A549 (cell line): ENCODE measurements at regions of chr10 and their contacts with region 1.

Region 1: DNA sequence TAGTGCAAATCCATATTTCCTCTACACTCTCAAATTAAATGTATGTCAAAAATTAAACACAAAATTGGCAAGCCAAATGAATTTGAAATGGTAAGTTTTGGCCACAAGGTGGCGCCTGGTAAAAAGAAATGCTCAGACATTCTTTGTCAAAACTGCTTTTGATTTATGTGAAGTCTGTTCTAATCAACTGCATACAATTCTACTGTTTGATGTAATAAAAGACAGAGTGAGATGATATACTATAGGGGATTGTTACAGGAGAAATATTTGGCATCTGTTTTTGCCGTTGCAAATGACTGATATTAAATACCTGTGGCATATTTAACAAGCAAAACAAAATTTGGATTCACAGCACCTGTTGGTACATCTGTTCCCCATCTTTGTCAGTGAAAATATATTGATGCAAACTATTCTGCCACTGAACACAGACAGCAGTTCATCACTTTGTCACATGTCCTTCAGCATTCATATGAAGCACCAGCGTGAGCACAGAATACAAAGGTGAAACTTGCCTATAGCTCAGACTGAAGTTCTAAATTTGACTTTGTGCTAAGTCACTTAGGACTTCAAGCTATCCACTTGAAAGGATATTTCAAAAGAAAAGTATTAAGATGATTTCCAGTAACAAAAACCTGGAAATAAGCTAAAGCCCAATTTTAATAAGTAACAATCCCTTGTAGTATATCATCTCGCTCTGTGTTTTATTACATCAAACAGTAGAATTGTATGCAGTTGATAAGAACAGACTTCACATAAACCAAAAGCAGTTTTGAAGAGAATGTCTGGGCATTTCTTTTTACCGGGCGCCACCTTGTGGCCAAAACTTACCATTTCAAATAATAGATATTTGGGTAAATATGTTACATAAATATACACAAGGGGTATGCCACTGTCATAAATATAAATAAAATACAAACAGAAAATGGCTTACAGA is 10.2 kb upstream of the CH25H start:
- DNase-seq: peak; percentile 24 to 58
- ATAC-seq: peak; percentile 69 to 74; a peak in 4 of 6 replicates
- H3K4me3 ChIP-seq: no peak overlapping the region
- H3K27ac ChIP-seq: no peak overlapping the region
- H3K4me1 ChIP-seq: peaks cover 6% of the 10 kb centered on the region; the same call in 2 of the 3 replicates
- CTCF ChIP-seq: peak; percentile 84
- EP300 ChIP-seq: no peak
- POLR2A ChIP-seq: no peak
- RAD21 ChIP-seq: peak; percentile 69 to 70

Region 2: DNA sequence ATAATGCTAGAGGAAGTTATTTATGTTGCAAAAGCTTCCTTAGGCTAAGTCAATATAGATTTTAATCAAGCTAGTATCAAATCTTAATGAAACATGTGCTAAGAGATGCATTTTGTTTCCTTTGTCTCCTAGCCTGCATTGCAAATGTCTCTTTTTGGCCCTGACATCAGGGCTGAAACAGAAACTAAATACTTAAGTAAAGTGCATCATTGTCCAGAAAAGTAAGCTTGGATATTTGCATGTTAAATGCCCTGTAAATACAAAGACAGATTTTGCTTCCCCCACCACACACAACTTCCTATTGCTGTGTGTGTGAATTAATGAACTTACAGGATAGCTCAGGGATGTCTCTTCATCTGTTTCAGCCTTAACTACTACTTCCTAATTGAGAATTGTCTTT is 347.2 kb before region 1 on chr10:
- CTCF ChIA-PET with region 1: no interaction called
- POLR2A ChIA-PET with region 1: no interaction called
- DNase-seq: no peak
- ATAC-seq: no peak
- H3K4me3 ChIP-seq: no peak overlapping the region
- H3K27ac ChIP-seq: no peak overlapping the region
- H3K4me1 ChIP-seq: no peaks in the 10 kb centered on the region
- CTCF ChIP-seq: no peak
- EP300 ChIP-seq: no peak
- POLR2A ChIP-seq: no peak
- RAD21 ChIP-seq: no peak

Region 3: GRCh38 chr10:89003344-89003743 is 214.0 kb before region 1 on chr10:
- CTCF ChIA-PET with region 1: interaction called, 10 read pairs
- POLR2A ChIA-PET with region 1: no interaction called
- DNase-seq: no peak
- ATAC-seq: no peak
- H3K4me3 ChIP-seq: no peak overlapping the region
- H3K27ac ChIP-seq: no peak overlapping the region
- H3K4me1 ChIP-seq: no peaks in the 10 kb centered on the region; the same call in 2 of the 3 replicates
- CTCF ChIP-seq: no peak
- EP300 ChIP-seq: no peak
- POLR2A ChIP-seq: no peak
- RAD21 ChIP-seq: no peak

Region 4: GRCh38 chr10:89029785-89030437 is 187.4 kb before region 1 on chr10:
- CTCF ChIA-PET with region 1: interaction called, 90 read pairs
- POLR2A ChIA-PET with region 1: no interaction called
- DNase-seq: peak; percentile 35 to 75
- ATAC-seq: peak; percentile 70 to 85
- H3K4me3 ChIP-seq: no peak overlapping the region
- H3K27ac ChIP-seq: no peak overlapping the region
- H3K4me1 ChIP-seq: peaks cover 23% of the 10 kb centered on the region
- CTCF ChIP-seq: peak; percentile 89
- EP300 ChIP-seq: no peak
- POLR2A ChIP-seq: no peak
- RAD21 ChIP-seq: peak; percentile 91

Region 5: GRCh38 chr10:89165923-89166322 is 51.4 kb before region 1 on chr10:
- CTCF ChIA-PET with region 1: no interaction called
- POLR2A ChIA-PET with region 1: no interaction called
- DNase-seq: no peak
- ATAC-seq: no peak
- H3K4me3 ChIP-seq: no peak overlapping the region
- H3K27ac ChIP-seq: no peak overlapping the region
- H3K4me1 ChIP-seq: no peaks in the 10 kb centered on the region
- CTCF ChIP-seq: no peak
- EP300 ChIP-seq: no peak
- POLR2A ChIP-seq: no peak
- RAD21 ChIP-seq: no peak

Region 6: DNA sequence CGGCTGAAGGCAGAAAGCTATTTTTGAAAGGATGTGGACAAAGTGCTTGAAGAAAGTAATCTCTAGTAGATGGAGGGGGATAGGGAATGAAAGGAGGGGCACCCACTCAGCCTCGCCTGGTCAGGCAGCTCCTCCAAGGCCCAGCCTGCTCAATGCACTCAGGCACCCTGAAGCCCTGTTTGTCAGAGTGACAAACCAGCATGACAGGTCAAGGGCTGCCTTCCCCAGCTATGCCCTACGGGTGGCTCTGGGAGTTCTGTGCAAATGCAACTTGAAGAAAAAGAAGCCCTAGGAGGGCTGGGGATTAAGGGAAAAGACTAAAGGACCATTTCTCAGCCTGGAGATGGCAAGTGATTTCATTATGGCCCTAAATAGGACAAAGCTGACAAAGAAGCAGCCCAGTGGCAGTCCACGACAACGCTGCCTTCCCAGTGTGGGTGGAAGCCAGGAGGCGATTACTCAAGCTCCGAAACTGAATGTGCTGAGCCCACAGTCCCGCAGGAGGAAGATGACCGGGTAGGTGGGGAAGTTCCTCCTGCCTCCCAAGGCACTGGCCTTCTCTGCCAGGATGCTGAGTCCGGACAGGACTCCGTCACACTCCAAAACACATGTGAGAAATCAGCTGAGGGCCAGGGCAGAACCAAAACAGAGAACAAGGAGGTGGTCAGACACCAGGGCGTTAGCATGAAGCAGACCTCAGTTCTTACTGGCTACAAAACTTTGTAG is 17.9 kb after region 1 on chr10:
- CTCF ChIA-PET with region 1: interaction called, 31 read pairs
- POLR2A ChIA-PET with region 1: no interaction called
- DNase-seq: no peak
- ATAC-seq: no peak
- H3K4me3 ChIP-seq: no peak overlapping the region
- H3K27ac ChIP-seq: no peak overlapping the region
- H3K4me1 ChIP-seq: no peaks in the 10 kb centered on the region
- CTCF ChIP-seq: no peak
- EP300 ChIP-seq: no peak
- POLR2A ChIP-seq: no peak
- RAD21 ChIP-seq: no peak

Region 7: DNA sequence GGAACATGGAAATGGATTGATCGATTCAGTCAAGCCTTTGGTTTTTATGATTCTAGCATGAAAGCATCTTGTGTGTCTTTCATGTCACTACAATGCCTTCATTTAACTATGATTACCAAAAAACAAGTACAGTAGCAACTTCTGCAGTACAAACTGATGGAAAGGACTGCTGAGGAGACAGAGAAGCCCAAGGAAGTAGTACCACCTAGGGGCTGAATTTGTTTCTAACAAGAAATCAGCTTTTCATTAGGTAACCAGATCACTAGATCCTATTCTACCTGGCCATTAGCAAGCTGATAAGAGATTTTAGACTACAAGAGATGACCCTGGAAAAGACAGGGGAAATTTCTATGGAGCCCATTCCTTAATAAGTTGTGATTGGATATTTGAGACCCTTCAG is 171.9 kb after region 1 on chr10:
- CTCF ChIA-PET with region 1: interaction called, 17 read pairs
- POLR2A ChIA-PET with region 1: no interaction called
- DNase-seq: peak in 1 of 2 experiments; percentile 57
- ATAC-seq: peak; percentile 44 to 64; a peak in 3 of 6 replicates
- H3K4me3 ChIP-seq: no peak overlapping the region
- H3K27ac ChIP-seq: no peak overlapping the region
- H3K4me1 ChIP-seq: peaks cover 13% of the 10 kb centered on the region
- CTCF ChIP-seq: peak; percentile 73
- EP300 ChIP-seq: no peak
- POLR2A ChIP-seq: no peak
- RAD21 ChIP-seq: peak; percentile 84 to 88